ENCODE measurements at regions of chr7 and their contacts with region 1.

Region 1: DNA sequence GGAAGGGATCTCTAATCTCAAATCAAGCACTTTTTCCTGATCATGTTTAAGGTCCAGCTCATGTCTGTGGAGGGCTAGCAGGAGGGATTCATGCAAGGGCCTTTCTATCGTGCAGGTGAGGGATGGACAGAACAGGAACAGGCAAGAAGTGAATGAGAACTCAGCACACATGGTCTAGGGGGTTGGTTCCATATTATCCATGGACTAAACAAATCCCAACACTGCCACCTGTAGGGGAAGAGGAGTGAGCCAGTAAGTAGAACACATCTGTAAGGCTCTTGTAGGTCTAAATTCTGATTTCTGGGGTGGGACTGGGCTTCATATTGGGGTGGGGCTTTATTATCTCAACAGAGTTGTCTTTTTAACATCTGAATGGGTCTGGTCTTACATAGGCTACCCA is 138.0 kb upstream of the TARP start:
- DNase-seq: no peak
- ATAC-seq: no peak
- H3K4me3 ChIP-seq: no peak overlapping the region
- H3K27ac ChIP-seq: no peak overlapping the region
- H3K4me1 ChIP-seq: no peaks in the 10 kb centered on the region
- H3K27me3 ChIP-seq: no peaks in the 10 kb centered on the region
- CTCF ChIP-seq: no peak
- POLR2A ChIP-seq: no peak

Region 2: GRCh38 chr7:38374507-38374906 is 36.9 kb before region 1 on chr7:
- in situ Hi-C with region 1: no loop called
- intact Hi-C with region 1: no loop called
- DNase-seq: no peak
- ATAC-seq: no peak
- H3K4me3 ChIP-seq: no peak overlapping the region
- H3K27ac ChIP-seq: no peak overlapping the region
- H3K4me1 ChIP-seq: peaks cover 0 to 1% of the 10 kb centered on the region in 2 donors
- H3K27me3 ChIP-seq: no peaks in the 10 kb centered on the region
- CTCF ChIP-seq: peak in 3 of 5 experiments; percentile 25 to 46 (median 37)
- POLR2A ChIP-seq: no peak

Region 3: GRCh38 chr7:38751416-38751815 is 340.0 kb after region 1 on chr7:
- in situ Hi-C with region 1: no loop called
- intact Hi-C with region 1: loop called (anchors 10 kb)
- DNase-seq: no peak
- ATAC-seq: no peak
- H3K4me3 ChIP-seq: no peak overlapping the region
- H3K27ac ChIP-seq: no peak overlapping the region
- H3K4me1 ChIP-seq: peaks cover 0 to 9% of the 10 kb centered on the region in 2 donors
- H3K27me3 ChIP-seq: no peaks in the 10 kb centered on the region
- CTCF ChIP-seq: no peak
- POLR2A ChIP-seq: no peak

Region 4: GRCh38 chr7:39504963-39505362 is 1093.6 kb after region 1 on chr7:
- in situ Hi-C with region 1: loop called in 2 of 4 experiments (anchors 25 kb)
- intact Hi-C with region 1: no loop called
- DNase-seq: no peak
- ATAC-seq: no peak
- H3K4me3 ChIP-seq: no peak overlapping the region
- H3K27ac ChIP-seq: no peak overlapping the region
- H3K4me1 ChIP-seq: no peaks in the 10 kb centered on the region
- H3K27me3 ChIP-seq: no peaks in the 10 kb centered on the region
- CTCF ChIP-seq: no peak
- POLR2A ChIP-seq: no peak

Measured in gastrocnemius medialis (tissue), 4 donors.